Activated B cell treated with CpG ODN at 0.5 μM for 24 hours (primary cell): ENCODE measurements at regions of chr2 and their contacts with region 1.

Region 1: DNA sequence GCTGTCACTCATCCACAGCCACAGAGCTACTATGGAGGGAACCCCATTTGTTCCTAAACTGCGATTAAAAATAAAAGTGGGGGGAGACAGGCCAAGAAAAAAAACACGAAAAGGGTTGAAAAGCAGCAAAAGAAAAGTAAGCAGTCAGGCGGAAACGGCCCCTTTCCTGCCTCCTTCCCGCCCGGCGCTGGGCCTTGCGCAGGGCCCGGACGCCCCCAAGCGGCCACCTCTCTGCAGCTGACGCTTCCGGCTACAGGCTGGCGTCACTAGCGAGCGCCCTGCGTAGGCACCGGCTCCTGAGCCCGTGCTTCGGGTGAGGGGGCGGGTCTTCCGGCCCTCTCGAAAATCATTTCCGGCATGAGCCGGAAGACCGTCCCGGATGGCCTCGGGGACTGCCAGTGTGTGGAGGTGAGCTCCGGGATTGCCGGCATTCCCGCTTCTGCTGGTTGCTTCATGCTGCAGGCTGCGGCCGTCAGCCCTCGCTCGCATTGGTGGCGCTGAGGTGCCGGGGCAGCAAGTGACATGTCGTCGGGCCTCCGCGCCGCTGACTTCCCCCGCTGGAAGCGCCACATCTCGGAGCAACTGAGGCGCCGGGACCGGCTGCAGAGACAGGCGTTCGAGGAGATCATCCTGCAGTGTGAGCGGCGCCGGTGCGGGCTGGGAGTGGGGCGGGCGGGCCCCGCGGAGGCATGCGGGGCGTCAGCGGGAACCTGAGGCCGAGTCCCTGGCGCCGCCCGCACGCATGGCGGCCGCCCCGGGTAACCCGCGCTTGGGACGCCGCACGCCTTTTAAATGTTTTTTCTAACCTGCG is at the start of gene ATG16L1:
- DNase-seq: peak; percentile 88
- ATAC-seq: peak; percentile 98
- H3K4me3 Mint-ChIP-seq: peak within 1 kb of the TSS; percentile 92
- H3K27ac Mint-ChIP-seq: peak within 1 kb of the TSS; percentile 91
- H3K4me1 Mint-ChIP-seq: peaks cover 53% of the 10 kb centered on the region
- H3K27me3 Mint-ChIP-seq: no peaks in the 10 kb centered on the region
- CTCF ChIP-seq: peak; percentile 57
- total RNA-seq, gene ATG16L1: 39.0 and 49.9 TPM in 2 replicates

Region 2: GRCh38 chr2:232611551-232612218 is 639.8 kb before region 1 on chr2:
- CTCF ChIA-PET with region 1: no interaction called
- POLR2A ChIA-PET with region 1: no interaction called
- intact Hi-C with region 1: loop called (anchors 1 kb)
- DNase-seq: peak; percentile 56
- ATAC-seq: peak; percentile 57
- H3K4me3 Mint-ChIP-seq: no peak overlapping the region
- H3K27ac Mint-ChIP-seq: no peak overlapping the region
- H3K4me1 Mint-ChIP-seq: no peaks in the 10 kb centered on the region
- H3K27me3 Mint-ChIP-seq: no peaks in the 10 kb centered on the region
- CTCF ChIP-seq: no peak

Region 3: GRCh38 chr2:232838406-232838874 is 413.1 kb before region 1 on chr2:
- CTCF ChIA-PET with region 1: interaction called, 3 read pairs
- POLR2A ChIA-PET with region 1: no interaction called
- intact Hi-C with region 1: loop called (anchors 5 kb)
- DNase-seq: peak; percentile 32
- ATAC-seq: peak; percentile 94
- H3K4me3 Mint-ChIP-seq: peak overlapping the region; percentile 59
- H3K27ac Mint-ChIP-seq: peak overlapping the region; percentile 88
- H3K4me1 Mint-ChIP-seq: peaks cover 32% of the 10 kb centered on the region
- H3K27me3 Mint-ChIP-seq: no peaks in the 10 kb centered on the region
- CTCF ChIP-seq: no peak

Region 4: DNA sequence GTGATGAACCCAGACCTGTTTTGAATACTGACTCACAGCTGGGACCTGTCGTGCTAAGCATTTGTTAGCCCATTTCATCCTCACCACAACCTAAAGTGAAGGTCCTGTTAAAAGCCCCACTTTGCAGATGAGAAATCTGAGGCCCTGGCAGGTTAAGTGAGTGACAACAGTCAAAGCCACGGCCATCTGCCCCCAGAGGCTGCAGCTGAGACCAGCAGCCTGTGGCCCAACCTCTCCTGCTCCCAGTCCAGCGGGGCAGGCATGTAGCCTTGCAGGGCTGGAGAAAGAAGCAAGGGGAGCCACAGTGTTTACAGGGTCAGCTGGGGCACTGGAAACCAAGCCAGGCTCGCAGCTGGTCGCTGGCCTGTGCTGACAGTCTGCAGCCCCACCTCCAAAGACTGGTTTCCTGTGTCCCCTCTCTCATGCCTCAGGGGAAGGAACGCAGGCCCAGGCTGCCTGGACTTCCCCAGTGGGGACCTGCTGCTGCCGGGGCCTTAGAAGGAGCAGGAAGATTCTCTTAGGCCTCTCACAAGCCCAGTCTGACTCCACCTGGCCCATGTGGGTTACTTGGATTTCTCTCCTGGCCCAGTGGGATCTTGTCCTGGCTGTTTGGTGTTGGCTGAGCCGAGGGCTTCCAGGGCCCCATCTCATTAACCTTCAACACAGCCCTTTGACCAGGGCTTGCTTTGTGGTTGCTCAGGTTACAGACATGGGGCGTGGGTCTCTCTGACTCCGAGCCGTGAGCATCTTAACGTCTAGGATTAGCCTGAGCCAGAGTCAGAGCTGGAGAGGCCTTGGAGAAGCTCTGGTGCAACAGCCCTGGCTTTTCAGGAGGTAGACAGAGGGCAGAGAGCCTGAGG is 189.7 kb before region 1 on chr2:
- CTCF ChIA-PET with region 1: interaction called, 8 read pairs
- POLR2A ChIA-PET with region 1: interaction called, 19 read pairs
- intact Hi-C with region 1: loop called (anchors 1 kb)
- DNase-seq: peak; percentile 43
- ATAC-seq: peak; percentile 38
- H3K4me3 Mint-ChIP-seq: peak overlapping the region; percentile 96
- H3K27ac Mint-ChIP-seq: peak overlapping the region; percentile 87
- H3K4me1 Mint-ChIP-seq: peaks cover 64% of the 10 kb centered on the region
- H3K27me3 Mint-ChIP-seq: no peaks in the 10 kb centered on the region
- CTCF ChIP-seq: no peak

Region 5: GRCh38 chr2:233202531-233202944 is 49.0 kb before region 1 on chr2:
- CTCF ChIA-PET with region 1: interaction called, 5 read pairs
- POLR2A ChIA-PET with region 1: interaction called, 11 read pairs
- intact Hi-C with region 1: loop called (anchors 1 kb)
- DNase-seq: no peak
- ATAC-seq: peak; percentile 69
- H3K4me3 Mint-ChIP-seq: peak overlapping the region; percentile 53
- H3K27ac Mint-ChIP-seq: peak overlapping the region; percentile 88
- H3K4me1 Mint-ChIP-seq: peaks cover 41% of the 10 kb centered on the region
- H3K27me3 Mint-ChIP-seq: no peaks in the 10 kb centered on the region
- CTCF ChIP-seq: no peak

Region 6: GRCh38 chr2:233892793-233893192 is 641.3 kb after region 1 on chr2:
- CTCF ChIA-PET with region 1: no interaction called
- POLR2A ChIA-PET with region 1: no interaction called
- intact Hi-C with region 1: no loop called
- DNase-seq: no peak
- ATAC-seq: no peak
- H3K4me3 Mint-ChIP-seq: no peak overlapping the region
- H3K27ac Mint-ChIP-seq: no peak overlapping the region
- H3K4me1 Mint-ChIP-seq: no peaks in the 10 kb centered on the region
- H3K27me3 Mint-ChIP-seq: peaks cover 42% of the 10 kb centered on the region
- CTCF ChIP-seq: no peak